Gastrocnemius medialis (tissue), 4 donors: ENCODE measurements at regions of chrX and their contacts with region 1.

Region 1: DNA sequence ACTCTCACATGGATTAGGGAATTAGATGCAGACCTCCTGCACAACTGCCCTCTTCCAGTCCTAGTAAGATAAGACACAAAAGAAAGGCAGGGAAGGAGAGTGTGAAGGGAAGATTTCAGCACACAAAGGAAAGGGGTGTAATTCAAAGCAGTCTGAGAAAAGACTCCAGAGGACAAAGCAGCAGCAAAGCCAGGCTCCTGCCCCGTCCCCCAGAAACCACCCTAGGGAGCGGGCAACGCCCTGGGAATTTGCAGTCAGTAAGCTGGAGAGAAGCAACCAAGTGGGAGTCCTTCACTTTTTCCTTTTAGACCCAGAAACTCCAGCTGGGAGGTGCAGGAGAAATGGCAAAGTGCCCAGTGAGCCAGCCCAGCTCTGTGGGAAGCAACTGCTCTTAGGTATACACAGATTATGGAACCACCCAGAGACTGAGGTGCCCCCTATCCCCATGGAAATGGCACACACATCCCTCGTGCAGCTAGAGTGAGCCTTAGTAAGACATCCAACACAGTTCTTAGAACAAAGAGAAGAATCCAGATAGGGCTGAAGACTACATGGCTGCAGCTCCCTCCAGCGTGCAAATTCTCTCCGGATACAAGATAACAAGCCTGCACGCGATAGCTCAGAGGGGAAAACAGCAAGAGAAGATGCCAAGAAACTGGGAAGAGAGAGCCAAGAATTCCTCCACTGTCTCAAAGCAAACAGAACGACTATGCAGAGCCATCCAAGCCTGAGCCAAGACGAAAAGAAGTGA is 26.5 kb upstream of the IRAK1 start:
- DNase-seq: peak; percentile 23 to 31
- ATAC-seq: peak; percentile 15 to 48
- H3K4me3 ChIP-seq: no peak overlapping the region
- H3K27ac ChIP-seq: peak overlapping the region; percentile 82 to 89 (median 88)
- H3K4me1 ChIP-seq: peaks cover 76 to 85% of the 10 kb centered on the region in 2 donors
- H3K27me3 ChIP-seq: no peaks in the 10 kb centered on the region
- CTCF ChIP-seq: no peak
- POLR2A ChIP-seq: no peak

Region 2: DNA sequence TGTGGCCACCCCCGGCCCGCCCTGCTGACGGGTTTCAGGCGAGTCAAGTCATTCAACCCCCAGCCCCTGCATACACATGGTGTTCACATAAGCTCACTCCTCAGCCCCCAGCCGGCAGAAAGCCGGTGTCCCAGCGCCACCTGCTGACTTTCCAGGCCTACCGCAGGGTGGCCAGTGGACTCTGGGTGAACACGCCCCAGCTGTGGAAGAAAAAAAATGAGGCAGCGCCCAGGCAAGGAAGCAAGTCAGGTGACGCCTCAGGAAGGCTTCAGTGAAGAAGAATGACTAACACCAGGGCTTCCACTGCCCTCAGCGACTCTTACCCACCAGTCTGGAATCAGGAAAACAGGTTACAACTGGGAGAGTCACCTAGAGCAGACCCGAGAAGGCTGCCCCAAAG is 337.8 kb before region 1 on chrX:
- in situ Hi-C with region 1: no loop called
- intact Hi-C with region 1: loop called (anchors 10 kb)
- DNase-seq: peak; percentile 70 to 87
- ATAC-seq: peak; percentile 49 to 62
- H3K4me3 ChIP-seq: no peak overlapping the region
- H3K27ac ChIP-seq: peak overlapping the region; percentile 85 to 91 (median 90)
- H3K4me1 ChIP-seq: peaks cover 17 to 44% of the 10 kb centered on the region in 2 donors
- H3K27me3 ChIP-seq: no peaks in the 10 kb centered on the region
- CTCF ChIP-seq: peak; percentile 58 to 80 (median 72)
- POLR2A ChIP-seq: no peak

Region 3: GRCh38 chrX:154029439-154029838 is 16.8 kb before region 1 on chrX:
- in situ Hi-C with region 1: no loop called
- intact Hi-C with region 1: no loop called
- DNase-seq: no peak
- ATAC-seq: no peak
- H3K4me3 ChIP-seq: no peak overlapping the region
- H3K27ac ChIP-seq: peak overlapping the region in 2 of 4 donors; percentile 31 to 46
- H3K4me1 ChIP-seq: peaks cover 0 to 9% of the 10 kb centered on the region in 2 donors
- H3K27me3 ChIP-seq: no peaks in the 10 kb centered on the region
- CTCF ChIP-seq: no peak
- POLR2A ChIP-seq: no peak

Region 4: GRCh38 chrX:154074199-154074598 is 28.0 kb after region 1 on chrX:
- in situ Hi-C with region 1: no loop called
- intact Hi-C with region 1: no loop called
- DNase-seq: no peak
- ATAC-seq: no peak
- H3K4me3 ChIP-seq: no peak overlapping the region
- H3K27ac ChIP-seq: peak overlapping the region in 1 of 4 donors; percentile 34
- H3K4me1 ChIP-seq: peaks cover 17 to 22% of the 10 kb centered on the region in 2 donors
- H3K27me3 ChIP-seq: no peaks in the 10 kb centered on the region
- CTCF ChIP-seq: no peak
- POLR2A ChIP-seq: no peak

Region 5: DNA sequence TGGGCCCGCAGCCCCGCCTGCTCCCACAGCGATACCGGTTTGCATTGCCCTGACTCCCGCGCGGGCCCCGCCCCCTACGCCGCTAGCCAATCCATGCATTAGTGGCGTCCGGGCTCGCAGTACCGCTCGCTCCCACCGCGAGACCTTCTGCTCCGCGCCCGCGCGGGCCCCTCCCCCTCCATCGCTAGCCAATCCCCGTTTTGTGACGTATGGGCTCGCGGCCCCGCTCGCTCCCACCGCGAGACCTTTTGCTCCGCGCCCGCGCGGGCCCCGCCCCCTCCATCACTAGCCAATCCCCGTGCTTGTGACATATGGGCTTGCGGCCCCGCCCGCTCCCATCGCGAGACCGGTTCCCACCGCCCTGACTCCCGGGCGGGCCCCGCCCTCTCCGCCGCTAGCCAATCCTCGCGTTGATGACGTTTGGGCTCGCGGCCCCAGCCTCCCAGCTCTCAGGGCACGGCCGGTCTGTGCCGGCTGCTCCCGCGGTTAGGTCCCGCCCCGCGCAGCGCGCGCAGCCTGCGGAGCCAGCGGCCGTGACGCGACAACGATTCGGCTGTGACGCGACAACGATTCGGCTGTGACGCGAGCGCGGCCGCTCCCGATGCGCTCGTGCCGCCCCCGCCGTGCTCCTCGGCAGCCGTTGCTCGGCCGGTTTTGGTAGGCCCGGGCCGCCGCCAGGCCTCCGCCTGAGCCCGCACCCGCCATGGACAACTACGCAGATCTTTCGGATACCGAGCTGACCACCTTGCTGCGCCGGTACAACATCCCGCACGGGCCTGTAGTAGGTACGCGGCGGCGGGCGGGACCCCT is 332.8 kb after region 1 on chrX and contains the start of gene EMD:
- in situ Hi-C with region 1: no loop called
- intact Hi-C with region 1: no loop called
- DNase-seq: peak; percentile 95 to 98
- ATAC-seq: peak; percentile 79 to 84
- H3K4me3 ChIP-seq: peak within 1 kb of the TSS; percentile 67 to 84 (median 69)
- H3K27ac ChIP-seq: peak within 1 kb of the TSS; percentile 87 to 99 (median 96)
- H3K4me1 ChIP-seq: peaks cover 5 to 13% of the 10 kb centered on the region in 2 donors
- H3K27me3 ChIP-seq: no peaks in the 10 kb centered on the region
- CTCF ChIP-seq: peak in 1 of 5 experiments; percentile 5
- POLR2A ChIP-seq: peak; percentile 89 to 93
- total RNA-seq, gene EMD: 36.2 to 61.5 (median 53.2) TPM